Lower leg skin (tissue), 4 donors: ENCODE measurements at regions of chr6 and their contacts with region 1.

Region 1: GRCh38 chr6:161242779-161243693 is 30.8 kb downstream of the AGPAT4 start:
- DNase-seq: peak in 1 of 2 donors; percentile 89
- H3K4me3 ChIP-seq: no peak overlapping the region
- CTCF ChIP-seq: no peak
- POLR2A ChIP-seq: no peak

Region 2: GRCh38 chr6:160733050-160733646 is 509.9 kb before region 1 on chr6:
- intact Hi-C with region 1: loop called (anchors 5 kb)
- DNase-seq: no peak
- H3K4me3 ChIP-seq: no peak overlapping the region
- CTCF ChIP-seq: no peak
- POLR2A ChIP-seq: no peak